HEK293 (cell line): ENCODE measurements at regions of chrX and their contacts with region 1.

Region 1: DNA sequence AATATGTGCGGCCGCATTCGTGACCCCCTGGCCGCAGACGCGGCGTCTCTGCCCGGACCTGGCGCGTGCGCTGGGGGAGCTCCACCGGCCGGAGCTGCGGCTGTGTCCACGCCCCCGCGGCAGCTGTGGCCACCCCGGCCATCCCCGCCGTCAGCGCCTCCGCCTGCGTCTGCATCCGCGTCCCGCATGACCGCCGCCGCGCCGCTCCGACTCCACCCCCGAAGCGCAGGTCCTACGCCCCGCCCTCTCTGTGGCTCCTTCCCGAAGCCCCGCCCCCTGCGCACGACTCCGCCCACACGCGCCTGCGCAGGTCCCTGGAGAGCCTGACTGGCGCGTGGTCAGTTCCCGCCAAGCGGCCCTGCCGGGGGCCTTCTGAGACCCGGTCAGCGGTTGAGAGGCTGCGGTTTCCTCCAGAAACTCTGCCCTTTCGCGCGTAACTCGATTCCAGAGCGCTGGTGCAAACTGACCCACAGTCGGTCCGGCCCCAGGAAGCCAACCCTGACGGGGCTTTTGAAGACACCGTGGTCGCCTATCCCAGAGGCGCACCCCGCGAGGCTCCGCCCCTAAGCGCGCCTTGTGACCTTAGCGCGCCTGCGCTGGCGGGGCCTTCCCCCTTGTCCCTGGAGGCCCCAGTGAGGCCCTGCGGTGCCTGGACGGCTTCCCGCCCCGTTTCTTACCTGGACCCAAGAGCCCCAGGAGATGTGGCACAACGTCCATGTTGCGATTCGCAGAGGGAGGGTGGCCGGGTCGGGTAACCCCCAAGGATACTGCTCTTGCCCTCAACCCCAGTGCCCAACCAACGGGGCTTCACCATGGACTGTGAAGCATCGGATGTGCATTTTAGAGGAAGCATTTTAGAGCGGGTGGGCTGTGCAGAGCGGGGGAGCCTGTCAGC is at the start of gene LAGE3:
- H3K4me3 ChIP-seq: peak within 1 kb of the TSS; percentile 55
- H3K27ac ChIP-seq: peak within 1 kb of the TSS; percentile 94
- H3K4me1 ChIP-seq: no peaks in the 10 kb centered on the region; the same call in 1 of the 2 replicates
- CTCF ChIP-seq: no peak

Region 2: GRCh38 chrX:154458114-154458953 is 20.6 kb before region 1 on chrX and contains the start of gene PLXNA3:
- CTCF ChIA-PET with region 1: no interaction called
- POLR2A ChIA-PET with region 1: interaction called, 15 read pairs
- H3K4me3 ChIP-seq: peak within 1 kb of the TSS; percentile 70
- H3K27ac ChIP-seq: peak within 1 kb of the TSS; percentile 75
- H3K4me1 ChIP-seq: no peaks in the 10 kb centered on the region
- CTCF ChIP-seq: no peak

Region 3: GRCh38 chrX:155169881-155170280 is 690.9 kb after region 1 on chrX:
- CTCF ChIA-PET with region 1: no interaction called
- POLR2A ChIA-PET with region 1: no interaction called
- H3K4me3 ChIP-seq: no peak overlapping the region
- H3K27ac ChIP-seq: no peak overlapping the region
- H3K4me1 ChIP-seq: no peaks in the 10 kb centered on the region
- CTCF ChIP-seq: no peak